Heart left ventricle (tissue), 16 donors: ENCODE measurements at regions of chr14 and their contacts with region 1.

Region 1: GRCh38 chr14:49867831-49868723 is 15.5 kb upstream of the NEMF start:
- DNase-seq: peak; percentile 97 to 99 (median 97)
- ATAC-seq: peak; percentile 94 to 98 (median 97)
- H3K4me3 ChIP-seq: peak overlapping the region; percentile 45 to 84 (median 68)
- H3K27ac ChIP-seq: peak overlapping the region; percentile 56 to 96 (median 93)
- H3K4me1 ChIP-seq: peaks cover 0 to 49% (median 11%) of the 10 kb centered on the region in 12 donors
- H3K27me3 ChIP-seq: no peaks in the 10 kb centered on the region
- CTCF ChIP-seq: peak in 1 of 12 donors; percentile 5
- POLR2A ChIP-seq: peak in 1 of 2 donors; percentile 82

Region 2: DNA sequence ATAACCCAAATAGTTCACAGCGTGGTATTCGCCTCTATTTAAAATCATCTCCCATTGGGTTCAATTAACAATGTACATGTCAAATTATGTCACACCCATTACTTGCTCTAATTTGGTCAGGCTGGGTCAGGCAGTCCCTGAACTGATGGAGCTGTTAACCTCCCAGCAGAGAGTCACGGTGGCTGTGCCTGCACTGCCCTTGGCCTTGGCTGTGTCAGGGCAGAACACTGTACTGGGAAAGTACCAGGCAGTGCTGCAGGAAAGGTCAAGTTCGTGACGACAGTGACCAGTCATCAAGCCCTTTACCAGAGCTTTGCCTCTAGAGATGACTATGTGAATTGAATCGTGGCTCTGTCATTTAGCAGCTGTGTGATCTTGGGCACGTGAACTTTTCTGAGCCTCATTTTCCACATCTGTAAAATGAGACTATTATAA is 124.8 kb after region 1 on chr14:
- intact Hi-C with region 1: no loop called
- DNase-seq: peak in 2 of 5 donors; percentile 50 to 78
- ATAC-seq: peak; percentile 48 to 95 (median 78)
- H3K4me3 ChIP-seq: no peak overlapping the region
- H3K27ac ChIP-seq: peak overlapping the region in 3 of 12 donors; percentile 17 to 39 (median 37)
- H3K4me1 ChIP-seq: peaks cover 0 to 27% (median 5%) of the 10 kb centered on the region in 12 donors
- H3K27me3 ChIP-seq: no peaks in the 10 kb centered on the region
- CTCF ChIP-seq: no peak
- POLR2A ChIP-seq: no peak

Region 3: GRCh38 chr14:50003213-50004031 is 135.3 kb after region 1 on chr14:
- intact Hi-C with region 1: loop called in 4 of 10 experiments (anchors 5 to 10 kb)
- DNase-seq: peak; percentile 84 to 92 (median 87)
- ATAC-seq: peak in 3 of 4 donors; percentile 47 to 78 (median 56)
- H3K4me3 ChIP-seq: peak overlapping the region; percentile 28 to 80 (median 58)
- H3K27ac ChIP-seq: peak overlapping the region; percentile 43 to 92 (median 80)
- H3K4me1 ChIP-seq: peaks cover 0 to 60% (median 48%) of the 10 kb centered on the region in 12 donors
- H3K27me3 ChIP-seq: no peaks in the 10 kb centered on the region
- CTCF ChIP-seq: peak in 7 of 12 donors; percentile 8 to 50 (median 30)
- POLR2A ChIP-seq: peak in 1 of 2 donors; percentile 61

Region 4: DNA sequence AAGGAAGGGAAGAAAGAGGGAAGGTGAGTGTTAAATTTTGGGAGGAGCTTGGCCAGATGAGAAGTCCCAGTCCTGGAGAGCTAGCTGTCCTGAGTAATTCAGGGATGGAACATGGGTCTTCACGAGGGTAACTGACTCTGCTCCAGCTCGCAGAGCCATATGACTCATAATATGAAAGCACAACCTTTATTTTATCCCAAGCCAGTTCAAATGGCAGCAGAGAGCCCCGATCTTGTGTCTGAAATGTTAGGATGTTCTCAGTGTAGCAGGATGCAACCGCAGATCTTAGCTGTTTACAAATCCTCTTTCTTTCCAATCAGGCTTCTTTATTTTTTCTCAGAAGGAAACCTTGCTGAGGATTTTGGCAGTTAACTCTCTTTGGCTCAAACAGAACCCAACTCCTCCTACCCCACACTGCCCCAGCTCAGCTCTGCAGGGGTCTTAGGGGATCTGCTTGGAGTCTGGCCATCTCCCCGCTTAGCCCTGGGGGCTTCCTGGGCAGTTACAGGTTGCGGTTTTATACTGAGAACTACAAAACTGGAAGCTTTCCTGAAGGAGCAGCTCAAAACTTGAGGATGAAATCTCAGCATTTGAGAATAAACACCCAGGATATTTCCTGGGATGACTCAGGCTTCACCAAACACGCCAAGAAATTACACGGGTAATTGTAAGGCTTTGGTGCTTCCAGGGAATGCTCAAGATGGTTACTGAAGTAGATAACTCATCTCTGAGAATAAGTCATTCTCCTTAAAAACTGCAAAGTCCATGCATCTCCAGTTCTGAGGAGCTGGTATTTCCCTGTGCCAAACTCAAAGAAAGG is 155.8 kb after region 1 on chr14:
- intact Hi-C with region 1: no loop called
- DNase-seq: no peak
- ATAC-seq: peak in 3 of 4 donors; percentile 43 to 85 (median 60)
- H3K4me3 ChIP-seq: no peak overlapping the region
- H3K27ac ChIP-seq: peak overlapping the region in 10 of 12 donors; percentile 8 to 81 (median 43)
- H3K4me1 ChIP-seq: peaks cover 0 to 20% (median 5%) of the 10 kb centered on the region in 12 donors
- H3K27me3 ChIP-seq: no peaks in the 10 kb centered on the region
- CTCF ChIP-seq: no peak
- POLR2A ChIP-seq: no peak

Region 5: GRCh38 chr14:50060871-50061663 is 193.0 kb after region 1 on chr14:
- intact Hi-C with region 1: loop called in 1 of 10 experiments (anchors 5 kb)
- DNase-seq: peak in 3 of 5 donors; percentile 56 to 63 (median 63)
- ATAC-seq: peak; percentile 53 to 89 (median 78)
- H3K4me3 ChIP-seq: peak overlapping the region in 1 of 12 donors; percentile 15
- H3K27ac ChIP-seq: peak overlapping the region; percentile 5 to 91 (median 73)
- H3K4me1 ChIP-seq: peaks cover 5 to 79% (median 25%) of the 10 kb centered on the region in 12 donors
- H3K27me3 ChIP-seq: no peaks in the 10 kb centered on the region
- CTCF ChIP-seq: peak in 5 of 12 donors; percentile 3 to 22 (median 15)
- POLR2A ChIP-seq: no peak

Region 6: DNA sequence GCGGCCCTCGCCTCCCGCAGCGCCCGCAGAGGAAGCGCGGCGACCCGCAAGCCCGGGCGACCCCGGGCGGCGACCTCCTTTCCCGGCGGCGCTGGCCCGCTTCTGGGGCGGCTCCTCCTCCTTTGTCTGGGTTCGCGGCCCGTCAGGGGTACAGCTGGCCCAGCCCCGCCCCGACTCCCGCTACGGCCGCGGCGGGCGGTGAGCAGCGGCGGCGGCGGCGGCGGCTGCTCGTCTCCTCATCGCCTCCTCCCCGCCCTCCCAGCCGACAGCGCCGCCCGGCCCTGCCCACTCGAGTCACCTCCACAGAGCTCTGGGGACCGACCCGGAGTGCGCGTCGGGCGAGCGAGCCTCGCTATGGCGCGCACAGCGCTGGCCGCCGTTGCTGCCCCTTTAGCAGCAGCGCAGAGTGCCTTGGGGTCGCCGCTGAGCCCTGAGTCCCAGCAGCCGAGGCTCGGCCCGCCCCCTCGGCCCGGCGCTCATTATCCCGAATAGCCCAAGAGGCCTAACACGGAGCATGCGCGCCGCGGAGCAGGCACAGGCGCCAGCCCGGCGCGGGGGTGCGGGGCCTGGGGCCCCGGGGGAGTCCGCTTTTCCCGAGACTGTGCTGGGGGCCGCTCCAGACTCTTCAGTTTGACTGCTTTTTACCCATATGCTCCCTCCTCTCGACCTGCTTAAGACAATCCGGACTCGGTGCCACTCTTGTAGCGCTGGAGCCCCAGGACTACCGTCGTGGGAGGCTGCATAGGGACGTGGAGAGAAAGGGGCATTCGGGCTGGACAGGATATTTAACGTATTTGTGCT is 363.6 kb after region 1 on chr14 and contains the start of gene SOS2:
- intact Hi-C with region 1: loop called in 2 of 10 experiments (anchors 5 kb)
- DNase-seq: peak; percentile 89 to 94 (median 92)
- ATAC-seq: peak; percentile 82 to 96 (median 95)
- H3K4me3 ChIP-seq: peak within 1 kb of the TSS; percentile 67 to 95 (median 80)
- H3K27ac ChIP-seq: peak within 1 kb of the TSS; percentile 93 to 99 (median 98)
- H3K4me1 ChIP-seq: peaks cover 0 to 53% (median 40%) of the 10 kb centered on the region in 12 donors
- H3K27me3 ChIP-seq: no peaks in the 10 kb centered on the region
- CTCF ChIP-seq: peak in 3 of 12 donors; percentile 23 to 37 (median 26)
- POLR2A ChIP-seq: peak; percentile 42 to 84
- total RNA-seq, gene SOS2: 26.4 to 47.3 (median 31.5) TPM